Heart right ventricle (tissue), 16 donors: ENCODE measurements at regions of chr9 and their contacts with region 1.

Region 1: DNA sequence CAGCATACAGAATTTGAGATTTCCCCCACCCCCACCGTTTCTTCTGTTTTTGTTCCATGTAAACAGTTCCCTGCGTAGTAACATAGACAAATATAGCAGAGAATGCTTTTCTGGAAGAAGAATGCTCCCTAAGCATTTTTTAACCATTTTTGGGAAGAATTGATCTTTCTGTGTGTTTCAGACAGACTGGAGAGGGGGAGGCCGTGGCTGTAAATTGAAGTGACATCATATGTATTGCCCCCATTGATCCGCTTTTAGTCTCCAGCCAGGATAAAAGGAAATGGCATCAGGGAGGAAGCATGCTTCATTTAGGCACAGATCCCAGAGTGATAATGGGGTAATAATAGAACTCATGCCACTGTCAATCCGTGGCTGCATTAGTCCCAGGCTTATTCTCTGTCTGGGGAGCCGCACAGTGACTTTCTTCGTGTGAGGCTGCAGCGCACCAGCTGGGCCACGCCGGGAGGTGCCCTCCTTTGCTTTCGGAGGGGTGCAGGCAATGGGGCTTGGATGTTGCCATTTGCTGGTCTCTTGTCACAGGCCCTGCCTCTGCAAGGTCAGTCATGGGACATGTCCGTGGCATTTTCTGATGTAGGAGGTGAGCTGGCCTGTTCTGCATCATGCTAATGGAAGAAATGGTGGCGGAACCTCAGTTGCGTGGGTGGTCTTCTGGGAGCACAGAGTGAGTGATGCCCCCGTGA is 261.5 kb downstream of the FANCC start:
- DNase-seq: peak in 1 of 2 donors; percentile 64
- ATAC-seq: peak; percentile 62 to 87 (median 72)
- H3K4me3 ChIP-seq: peak overlapping the region in 8 of 10 donors; percentile 3 to 39 (median 32)
- H3K27ac ChIP-seq: peak overlapping the region; percentile 49 to 84 (median 70)
- H3K4me1 ChIP-seq: peaks cover 23 to 100% (median 87%) of the 10 kb centered on the region in 9 donors
- H3K27me3 ChIP-seq: no peaks in the 10 kb centered on the region
- CTCF ChIP-seq: no peak

Region 2: DNA sequence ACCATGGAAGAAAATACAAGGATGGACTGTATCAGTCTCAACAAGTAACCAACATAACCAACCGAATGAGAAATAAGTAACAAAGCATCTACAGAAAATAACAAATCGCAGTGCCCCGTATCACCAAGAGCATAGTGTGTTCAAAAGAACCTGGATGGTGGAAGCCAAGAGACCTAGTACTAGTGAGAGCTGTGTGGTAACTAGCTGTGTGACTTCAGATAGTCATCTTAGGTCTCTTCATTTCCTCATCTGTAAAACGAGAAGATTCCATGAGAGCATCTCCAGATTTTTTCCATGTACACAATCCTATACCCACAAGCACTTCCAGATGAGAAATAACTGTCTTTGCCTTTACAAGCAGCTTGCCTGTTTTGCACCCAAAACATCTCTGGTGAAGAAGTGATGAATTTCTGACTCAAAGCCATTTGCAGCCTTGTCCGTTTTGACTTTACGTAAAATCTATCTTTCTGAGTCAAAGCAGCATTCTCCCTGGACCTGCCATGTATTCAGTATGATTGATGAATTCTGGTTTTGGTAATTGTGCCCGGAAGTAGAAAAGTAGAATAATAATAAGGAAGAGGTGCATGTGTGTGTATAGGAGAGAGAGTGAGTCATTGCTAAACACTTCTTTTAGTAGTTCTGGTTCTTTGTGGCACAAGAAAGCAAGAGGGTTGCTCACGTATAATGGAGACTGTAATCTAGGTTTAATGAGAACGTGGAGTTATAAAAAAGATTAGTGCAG is 288.5 kb before region 1 on chr9:
- intact Hi-C with region 1: no loop called
- DNase-seq: no peak
- ATAC-seq: no peak
- H3K4me3 ChIP-seq: no peak overlapping the region
- H3K27ac ChIP-seq: no peak overlapping the region
- H3K4me1 ChIP-seq: peaks cover 0 to 3% (median 0%) of the 10 kb centered on the region in 9 donors
- H3K27me3 ChIP-seq: no peaks in the 10 kb centered on the region
- CTCF ChIP-seq: no peak

Region 3: GRCh38 chr9:94847486-94847885 is 208.5 kb before region 1 on chr9:
- intact Hi-C with region 1: no loop called
- DNase-seq: no peak
- ATAC-seq: peak in 4 of 8 donors; percentile 19 to 66 (median 47)
- H3K4me3 ChIP-seq: no peak overlapping the region
- H3K27ac ChIP-seq: peak overlapping the region in 1 of 10 donors; percentile 26
- H3K4me1 ChIP-seq: peaks cover 0 to 10% (median 0%) of the 10 kb centered on the region in 9 donors
- H3K27me3 ChIP-seq: no peaks in the 10 kb centered on the region
- CTCF ChIP-seq: no peak

Region 4: GRCh38 chr9:95025213-95026147 is 30.5 kb before region 1 on chr9:
- intact Hi-C with region 1: loop called in 3 of 10 experiments (anchors 5 kb)
- DNase-seq: peak; percentile 50 to 82
- ATAC-seq: peak; percentile 81 to 91 (median 86)
- H3K4me3 ChIP-seq: peak overlapping the region in 5 of 10 donors; percentile 6 to 20 (median 13)
- H3K27ac ChIP-seq: peak overlapping the region in 9 of 10 donors; percentile 2 to 87 (median 81)
- H3K4me1 ChIP-seq: peaks cover 21 to 100% (median 99%) of the 10 kb centered on the region in 9 donors
- H3K27me3 ChIP-seq: no peaks in the 10 kb centered on the region
- CTCF ChIP-seq: peak in 8 of 9 donors; percentile 26 to 61 (median 34)

Region 5: DNA sequence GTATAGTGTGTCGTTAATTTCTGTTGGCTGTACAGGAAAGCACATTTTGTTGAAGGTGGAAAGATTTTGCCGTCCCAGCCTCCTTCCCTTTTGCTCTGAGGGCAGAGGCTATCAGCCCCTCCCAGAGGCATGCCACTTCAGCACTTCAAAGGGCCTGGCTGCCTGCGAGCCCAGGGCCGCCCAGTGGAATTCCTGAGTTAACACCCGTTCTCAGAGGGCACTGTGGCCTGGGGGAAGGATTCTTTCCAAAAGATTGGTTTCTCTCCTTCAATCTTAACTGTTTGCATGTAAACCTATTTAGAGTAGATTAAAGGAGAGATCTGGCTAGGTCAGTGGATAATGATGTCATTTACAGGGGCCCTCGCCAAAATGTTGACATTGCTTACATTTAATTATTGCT is 23.0 kb after region 1 on chr9:
- intact Hi-C with region 1: loop called in 1 of 10 experiments (anchors 1 kb)
- DNase-seq: no peak
- ATAC-seq: peak; percentile 42 to 61 (median 47)
- H3K4me3 ChIP-seq: no peak overlapping the region
- H3K27ac ChIP-seq: peak overlapping the region in 9 of 10 donors; percentile 2 to 86 (median 68)
- H3K4me1 ChIP-seq: peaks cover 36 to 100% (median 92%) of the 10 kb centered on the region in 9 donors
- H3K27me3 ChIP-seq: no peaks in the 10 kb centered on the region
- CTCF ChIP-seq: no peak